ENCODE measurements at regions of chr2 and their contacts with region 1.

Region 1: DNA sequence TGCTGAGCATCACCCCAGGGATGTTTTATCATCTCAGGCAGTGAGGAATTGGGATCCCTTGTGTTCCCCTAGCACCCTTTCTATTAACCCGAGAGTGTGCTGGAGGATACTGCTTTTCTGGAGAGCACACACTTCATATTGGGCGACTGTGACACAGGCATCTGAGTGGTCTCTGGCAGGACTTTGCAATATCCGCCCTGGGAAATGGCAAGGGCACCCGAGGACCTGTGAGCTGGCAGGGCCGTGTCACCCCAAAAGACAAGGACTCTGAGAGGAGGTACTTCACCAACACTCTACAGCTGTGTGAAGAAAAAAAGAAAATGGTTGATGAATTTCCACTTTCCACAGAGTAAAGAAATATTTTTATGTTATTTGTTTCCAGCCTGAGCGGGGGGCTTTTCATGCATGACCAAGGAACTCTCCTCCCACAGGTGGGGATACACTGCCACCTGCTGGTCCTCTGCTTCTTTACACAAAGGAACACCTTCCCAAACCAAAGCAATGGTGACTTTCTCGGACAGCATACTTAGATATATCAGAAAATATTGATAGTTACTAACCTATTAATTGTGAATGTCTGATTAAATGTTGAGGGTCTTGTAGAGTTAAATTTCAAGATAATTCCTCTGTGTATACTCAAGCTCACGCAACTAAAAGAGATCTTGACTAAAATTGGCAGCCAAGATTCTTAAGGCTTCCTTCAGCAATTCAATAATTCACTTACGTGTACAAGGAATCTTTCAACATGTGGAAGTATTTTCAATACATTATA is 45.9 kb upstream of the REG3G start:
- DNase-seq: peak; percentile 88
- H3K4me3 ChIP-seq: no peak overlapping the region
- H3K27ac ChIP-seq: peak overlapping the region; percentile 68
- H3K4me1 ChIP-seq: peaks cover 29% of the 10 kb centered on the region
- H3K27me3 ChIP-seq: no peaks in the 10 kb centered on the region
- CTCF ChIP-seq: peak; percentile 89

Region 2: GRCh38 chr2:78351208-78351607 is 628.4 kb before region 1 on chr2:
- CTCF ChIA-PET with region 1: no interaction called
- POLR2A ChIA-PET with region 1: no interaction called
- intact Hi-C with region 1: loop called (anchors 5 kb)
- DNase-seq: peak; percentile 53
- H3K4me3 ChIP-seq: no peak overlapping the region
- H3K27ac ChIP-seq: no peak overlapping the region
- H3K4me1 ChIP-seq: peaks cover 20% of the 10 kb centered on the region
- H3K27me3 ChIP-seq: no peaks in the 10 kb centered on the region
- CTCF ChIP-seq: peak; percentile 62

Region 3: DNA sequence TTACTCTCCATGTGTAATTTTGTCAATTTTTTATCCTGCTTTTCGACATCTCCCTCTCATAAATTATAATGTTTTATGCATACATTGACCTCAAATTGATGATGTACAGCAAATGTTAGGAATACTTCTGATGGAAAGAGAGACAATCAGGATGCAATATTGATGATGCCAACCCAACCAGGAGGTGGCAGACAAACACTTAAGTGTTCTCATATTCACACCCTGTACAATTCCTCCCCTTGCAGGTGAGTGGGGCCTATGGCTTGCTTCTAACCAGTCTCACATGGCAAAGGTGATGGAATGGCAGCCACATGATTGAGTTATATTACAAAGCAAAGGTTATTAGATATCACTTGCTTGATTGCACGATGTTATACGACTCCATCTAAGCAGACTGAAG is 548.3 kb before region 1 on chr2:
- CTCF ChIA-PET with region 1: no interaction called
- POLR2A ChIA-PET with region 1: no interaction called
- intact Hi-C with region 1: loop called (anchors 2 kb)
- DNase-seq: peak; percentile 52
- H3K4me3 ChIP-seq: no peak overlapping the region
- H3K27ac ChIP-seq: no peak overlapping the region
- H3K4me1 ChIP-seq: peaks cover 8% of the 10 kb centered on the region
- H3K27me3 ChIP-seq: no peaks in the 10 kb centered on the region
- CTCF ChIP-seq: peak; percentile 57

Region 4: GRCh38 chr2:78576409-78576808 is 403.2 kb before region 1 on chr2:
- CTCF ChIA-PET with region 1: no interaction called
- POLR2A ChIA-PET with region 1: no interaction called
- intact Hi-C with region 1: loop called (anchors 10 kb)
- DNase-seq: no peak
- H3K4me3 ChIP-seq: no peak overlapping the region
- H3K27ac ChIP-seq: no peak overlapping the region
- H3K4me1 ChIP-seq: peaks cover 15% of the 10 kb centered on the region
- H3K27me3 ChIP-seq: no peaks in the 10 kb centered on the region
- CTCF ChIP-seq: no peak

Region 5: GRCh38 chr2:78707776-78708386 is 271.7 kb before region 1 on chr2:
- CTCF ChIA-PET with region 1: no interaction called
- POLR2A ChIA-PET with region 1: no interaction called
- intact Hi-C with region 1: loop called (anchors 1 kb)
- DNase-seq: peak; percentile 83
- H3K4me3 ChIP-seq: no peak overlapping the region
- H3K27ac ChIP-seq: peak overlapping the region; percentile 88
- H3K4me1 ChIP-seq: no peaks in the 10 kb centered on the region
- H3K27me3 ChIP-seq: no peaks in the 10 kb centered on the region
- CTCF ChIP-seq: no peak

Region 6: DNA sequence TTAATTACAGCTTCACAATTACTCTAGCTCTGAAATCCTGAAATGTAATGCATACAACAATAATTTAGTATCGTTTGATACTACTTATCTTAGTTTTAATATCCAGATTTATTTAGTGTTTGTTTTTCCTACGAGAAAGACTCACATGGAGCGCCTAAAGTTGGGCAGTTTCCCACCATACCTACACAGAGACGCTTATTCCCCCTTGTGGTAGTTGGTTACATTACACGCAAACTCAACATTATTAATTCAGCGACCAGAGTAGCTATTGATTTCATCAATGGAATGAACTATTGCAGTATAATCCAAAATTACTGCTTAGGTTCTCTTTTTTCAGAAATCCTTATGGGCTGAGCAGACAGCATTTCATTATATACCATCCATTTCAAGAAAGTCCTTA is 118.0 kb before region 1 on chr2:
- CTCF ChIA-PET with region 1: no interaction called
- POLR2A ChIA-PET with region 1: no interaction called
- intact Hi-C with region 1: loop called (anchors 10 kb)
- DNase-seq: peak; percentile 68
- H3K4me3 ChIP-seq: no peak overlapping the region
- H3K27ac ChIP-seq: no peak overlapping the region
- H3K4me1 ChIP-seq: no peaks in the 10 kb centered on the region
- H3K27me3 ChIP-seq: no peaks in the 10 kb centered on the region
- CTCF ChIP-seq: peak; percentile 62

Measured in A673 (cell line).